ENCODE measurements at regions of chr5 and their contacts with region 1.

Region 1: GRCh38 chr5:116068028-116068632 is 16.7 kb upstream of the COMMD10 start:
- DNase-seq: peak in 2 of 10 donors; percentile 22 to 30
- H3K4me3 ChIP-seq: peak overlapping the region in 6 of 59 donors; percentile 9 to 36 (median 20)
- H3K27ac ChIP-seq: no peak overlapping the region
- H3K27me3 ChIP-seq: peaks cover 0 to 8% (median 0%) of the 10 kb centered on the region in 45 donors
- CTCF ChIP-seq: peak; percentile 76 to 96 (median 89)

Region 2: DNA sequence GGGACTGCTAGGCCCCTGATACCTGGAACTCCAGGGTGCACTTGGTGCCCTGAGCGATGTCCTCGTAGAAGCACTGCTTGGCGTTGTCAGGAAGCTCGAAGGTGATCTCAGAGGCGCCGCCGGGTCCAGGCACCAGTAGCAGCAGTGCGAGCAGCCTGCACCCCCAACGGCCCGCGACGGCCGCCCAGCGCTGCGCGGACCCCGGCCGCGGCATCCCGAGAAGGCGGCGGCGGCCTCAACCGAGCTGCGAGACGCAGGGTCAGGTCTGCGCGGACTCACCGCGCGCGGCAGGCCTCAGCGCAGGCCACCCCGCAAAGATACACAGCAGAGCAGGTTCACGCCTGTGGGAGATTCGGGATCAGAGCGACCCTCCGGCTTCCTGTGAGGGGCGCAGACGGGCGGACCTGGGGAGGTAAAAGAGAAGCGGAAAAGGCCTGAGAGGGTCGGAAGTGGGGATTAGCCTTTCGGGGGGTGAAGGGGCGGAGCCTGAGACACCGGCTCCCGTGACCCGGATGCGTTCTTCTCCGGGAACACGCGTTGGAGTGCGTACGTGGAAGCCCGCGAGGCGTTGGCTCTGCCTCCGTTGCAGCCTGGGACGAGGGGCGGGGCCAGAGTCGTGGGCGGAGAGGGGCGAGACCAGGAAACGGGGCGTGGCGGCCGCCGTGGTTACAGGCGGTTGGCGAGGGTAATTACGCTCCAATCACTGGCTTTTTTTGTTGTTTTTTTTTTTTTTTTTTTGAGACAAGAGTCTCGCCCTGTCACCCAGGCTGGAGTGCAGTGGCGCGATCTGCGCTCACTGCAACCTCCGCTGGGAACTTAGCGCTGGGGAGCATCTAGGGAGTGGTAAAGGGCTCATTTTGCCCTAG is 442.3 kb before region 1 on chr5 and contains the start of gene TMED7:
- intact Hi-C with region 1: loop called (anchors 5 kb)
- DNase-seq: peak; percentile 98 to 100 (median 99)
- H3K4me3 ChIP-seq: peak within 1 kb of the TSS; percentile 58 to 99 (median 89)
- H3K27ac ChIP-seq: peak within 1 kb of the TSS; percentile 66 to 96 (median 91)
- H3K27me3 ChIP-seq: no peaks in the 10 kb centered on the region
- CTCF ChIP-seq: peak in 39 of 56 donors; percentile 8 to 59 (median 33)
- total RNA-seq, gene TMED7: 48.1 to 112 (median 68.4) TPM

Region 3: GRCh38 chr5:115634343-115635132 is 433.6 kb before region 1 on chr5:
- intact Hi-C with region 1: loop called (anchors 5 kb)
- DNase-seq: peak; percentile 74 to 93 (median 86)
- H3K4me3 ChIP-seq: peak overlapping the region in 58 of 59 donors; percentile 4 to 66 (median 48)
- H3K27ac ChIP-seq: peak overlapping the region in 48 of 59 donors; percentile 4 to 83 (median 62)
- H3K27me3 ChIP-seq: no peaks in the 10 kb centered on the region
- CTCF ChIP-seq: peak; percentile 76 to 97 (median 91)

Region 4: DNA sequence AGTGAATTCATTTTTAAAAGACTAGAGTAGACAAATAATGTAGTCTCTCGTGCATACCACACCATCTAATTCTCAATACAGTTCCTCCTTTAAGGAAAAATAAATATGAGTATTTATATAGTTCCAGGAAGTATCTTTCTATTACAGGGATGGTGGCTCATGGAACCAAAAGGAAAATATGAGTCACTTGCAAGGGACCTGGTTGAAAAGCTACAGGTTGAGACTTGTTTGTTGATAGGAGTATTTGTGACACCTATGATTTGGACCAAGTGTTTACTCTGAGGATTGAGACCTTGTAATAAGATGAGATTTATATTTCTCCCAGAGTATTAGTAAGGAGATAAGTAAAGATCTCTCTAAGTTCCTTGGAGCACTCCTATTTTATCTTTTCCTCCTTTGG is 319.1 kb before region 1 on chr5:
- intact Hi-C with region 1: no loop called
- DNase-seq: no peak
- H3K4me3 ChIP-seq: no peak overlapping the region
- H3K27ac ChIP-seq: no peak overlapping the region
- H3K27me3 ChIP-seq: peaks cover 0 to 3% (median 0%) of the 10 kb centered on the region in 45 donors
- CTCF ChIP-seq: no peak

Region 5: DNA sequence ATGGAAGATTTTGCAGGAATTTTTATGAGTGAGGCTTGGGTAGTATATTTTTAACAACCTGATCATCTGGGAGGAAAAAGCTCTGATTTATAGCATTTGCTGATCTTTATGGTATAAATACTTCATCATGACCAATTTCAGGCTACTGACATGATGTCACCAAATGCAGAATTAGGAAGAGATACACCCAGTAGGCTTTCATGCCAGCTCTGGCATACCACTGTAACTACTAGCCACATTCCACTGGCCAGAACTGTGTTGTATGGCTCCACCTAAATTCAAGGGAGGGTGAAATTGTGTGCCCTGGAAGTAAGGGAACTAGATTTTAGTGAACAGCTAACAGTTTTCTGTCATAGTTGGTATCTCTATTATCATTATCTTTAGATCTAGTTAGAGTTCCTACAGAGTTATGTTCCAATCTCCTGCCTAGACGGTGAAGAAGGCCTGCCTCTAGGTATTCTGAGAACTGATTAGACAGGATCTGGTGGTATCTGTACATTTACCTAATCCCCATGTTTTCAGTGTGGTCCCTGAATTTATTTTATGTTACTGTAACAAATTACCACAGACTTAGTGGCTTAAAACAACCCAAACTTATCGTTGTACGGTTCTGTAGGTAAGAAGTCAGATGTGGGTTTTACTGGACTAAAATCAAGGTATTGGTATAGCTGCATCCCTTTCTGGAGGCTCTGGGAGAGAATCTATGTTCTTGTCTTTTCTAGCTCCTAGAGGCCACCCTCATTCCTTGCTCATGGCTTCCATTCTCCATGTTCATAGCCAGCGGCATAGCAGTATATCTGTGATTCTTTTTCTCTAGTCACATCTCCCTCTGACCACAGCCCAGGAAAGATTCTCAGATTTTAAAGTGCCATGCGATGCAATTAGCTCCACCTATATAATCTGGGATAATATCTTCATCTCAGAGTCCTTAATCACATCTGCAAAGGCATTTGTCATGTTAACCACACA is 208.5 kb before region 1 on chr5:
- intact Hi-C with region 1: loop called in 1 of 2 experiments (anchors 10 kb)
- DNase-seq: no peak
- H3K4me3 ChIP-seq: no peak overlapping the region
- H3K27ac ChIP-seq: no peak overlapping the region
- H3K27me3 ChIP-seq: no peaks in the 10 kb centered on the region
- CTCF ChIP-seq: no peak

Region 6: DNA sequence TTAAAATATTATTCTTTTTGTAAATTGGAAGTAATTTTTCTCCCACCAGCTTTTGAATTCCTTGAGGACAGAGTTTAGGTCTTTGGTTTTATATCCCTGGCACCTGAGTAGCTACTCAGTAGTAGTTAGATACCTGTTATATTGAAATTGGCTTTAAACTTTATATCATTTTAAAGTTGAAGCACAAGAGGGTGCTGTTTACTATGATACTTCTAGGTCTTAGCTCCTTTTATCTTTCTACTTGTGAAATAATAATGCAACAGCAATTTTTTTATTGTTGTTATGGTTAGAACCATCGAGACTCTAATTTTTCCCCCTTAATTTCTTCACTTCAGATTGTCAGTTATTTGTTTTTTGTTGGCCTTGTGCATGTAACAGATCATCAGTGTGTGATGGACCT is 180.1 kb before region 1 on chr5:
- intact Hi-C with region 1: loop called in 1 of 2 experiments (anchors 5 kb)
- DNase-seq: no peak
- H3K4me3 ChIP-seq: no peak overlapping the region
- H3K27ac ChIP-seq: no peak overlapping the region
- H3K27me3 ChIP-seq: no peaks in the 10 kb centered on the region
- CTCF ChIP-seq: peak in 39 of 56 donors; percentile 7 to 65 (median 36)

Region 7: GRCh38 chr5:115968770-115969169 is 99.4 kb before region 1 on chr5:
- intact Hi-C with region 1: loop called in 1 of 2 experiments (anchors 5 kb)
- DNase-seq: no peak
- H3K4me3 ChIP-seq: no peak overlapping the region
- H3K27ac ChIP-seq: no peak overlapping the region
- H3K27me3 ChIP-seq: peaks cover 0 to 4% (median 0%) of the 10 kb centered on the region in 45 donors
- CTCF ChIP-seq: no peak